Activated CD4-positive, alpha-beta T cell treated with anti-CD3 and anti-CD28 coated beads for 36 hours (primary cell): ENCODE measurements at regions of chr12 and their contacts with region 1.

Region 1: DNA sequence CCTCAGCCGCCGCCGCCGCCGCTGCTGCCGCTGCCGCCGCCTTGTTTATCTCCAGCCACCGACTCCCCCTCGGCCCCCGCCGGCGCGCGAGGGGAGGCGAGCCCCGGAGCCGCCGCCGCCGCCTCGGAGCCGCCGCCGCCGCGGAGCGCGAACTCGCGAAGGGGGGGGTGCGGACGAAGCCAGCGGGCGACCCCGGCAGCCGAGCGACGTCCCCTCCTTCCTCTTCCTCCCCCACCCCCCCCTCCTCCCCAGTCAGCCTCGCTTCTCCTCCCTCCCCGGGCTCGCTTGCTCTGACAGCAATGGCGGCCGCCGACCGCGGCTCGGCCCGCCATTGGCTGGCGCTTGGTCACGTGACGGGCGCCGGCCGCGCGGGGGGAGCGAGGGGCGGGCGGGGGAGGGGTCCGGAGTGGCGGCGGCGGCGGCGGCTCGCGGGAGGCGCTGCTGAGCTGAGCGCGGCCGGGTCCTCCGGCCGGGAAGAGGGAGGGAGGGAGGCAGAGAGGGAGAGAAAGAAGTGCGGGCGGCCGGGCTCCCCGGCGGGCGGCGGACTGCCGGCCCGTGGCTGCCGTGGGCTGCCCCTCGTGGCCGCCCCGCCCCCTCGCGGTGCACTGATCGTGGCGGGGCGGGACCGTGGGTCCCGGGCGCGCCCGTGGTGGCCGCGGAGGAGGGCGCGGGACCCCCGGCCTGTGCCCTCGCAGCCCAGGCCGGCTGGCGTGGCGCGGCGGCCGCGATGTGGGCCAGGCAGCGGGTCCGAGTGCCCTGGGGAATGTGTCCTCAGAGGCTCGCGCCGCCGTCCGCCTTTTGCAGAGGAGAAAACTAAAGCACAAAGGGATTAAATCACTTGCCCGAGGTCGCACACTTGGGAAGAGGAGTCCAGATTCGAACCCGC is at the start of gene MED13L:
- DNase-seq: peak; percentile 92
- ATAC-seq: peak; percentile 82
- H3K4me3 Mint-ChIP-seq: peak within 1 kb of the TSS; percentile 95
- H3K27ac Mint-ChIP-seq: peak within 1 kb of the TSS; percentile 89
- H3K4me1 Mint-ChIP-seq: peaks cover 36% of the 10 kb centered on the region
- H3K27me3 Mint-ChIP-seq: no peaks in the 10 kb centered on the region
- total RNA-seq, gene MED13L: 38.5 to 41.9 TPM

Region 2: DNA sequence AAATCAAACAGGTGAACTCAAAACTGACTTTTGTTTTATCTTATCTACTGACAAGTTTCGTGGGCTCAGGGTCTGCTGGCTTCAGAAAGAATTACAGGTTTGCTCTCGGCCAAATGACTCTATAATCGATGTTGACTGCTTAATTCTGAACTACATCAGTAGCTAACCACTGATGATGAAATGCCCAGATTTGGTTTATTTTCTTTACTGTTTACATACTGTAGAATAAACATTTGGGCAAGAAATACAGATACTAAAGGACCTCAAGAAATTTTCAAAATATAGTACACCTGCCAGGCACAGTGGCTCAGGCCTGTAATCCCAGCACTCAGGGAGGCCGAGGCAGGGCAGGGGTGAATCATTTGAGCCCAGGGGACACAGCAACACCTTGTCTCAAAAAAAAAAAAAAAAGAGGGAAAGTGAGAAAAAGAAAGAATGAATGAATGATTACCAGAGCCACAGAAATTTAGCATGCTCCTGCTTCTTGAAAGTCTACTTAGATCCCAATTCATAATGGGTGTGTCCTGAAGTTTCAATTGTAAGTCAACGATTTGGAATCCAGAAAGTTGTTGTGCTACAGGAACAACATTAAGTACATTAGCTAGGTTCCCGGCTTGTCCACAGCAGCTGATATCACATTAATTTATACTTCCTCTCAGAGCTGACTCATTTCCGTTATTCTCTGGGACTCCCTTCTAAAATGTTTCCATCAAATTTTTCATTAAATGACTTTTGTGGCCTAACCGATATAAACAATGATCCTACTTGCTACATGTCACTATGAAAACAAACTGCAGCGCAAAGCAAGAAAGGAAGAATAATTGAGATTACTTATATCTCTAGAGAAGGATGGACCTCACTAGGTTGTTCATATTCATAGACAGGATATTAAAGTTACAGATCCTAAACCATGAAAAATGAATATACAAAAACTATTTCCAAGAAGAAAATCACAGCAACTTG is 134.4 kb before region 1 on chr12:
- CTCF ChIA-PET with region 1: no interaction called
- POLR2A ChIA-PET with region 1: no interaction called
- intact Hi-C with region 1: loop called (anchors 2 to 5 kb)
- DNase-seq: no peak
- ATAC-seq: peak; percentile 66
- H3K4me3 Mint-ChIP-seq: peak overlapping the region; percentile 31
- H3K27ac Mint-ChIP-seq: peak overlapping the region; percentile 68
- H3K4me1 Mint-ChIP-seq: peaks cover 55% of the 10 kb centered on the region
- H3K27me3 Mint-ChIP-seq: no peaks in the 10 kb centered on the region

Region 3: GRCh38 chr12:116533343-116534251 is 256.0 kb after region 1 on chr12:
- CTCF ChIA-PET with region 1: no interaction called
- POLR2A ChIA-PET with region 1: no interaction called
- intact Hi-C with region 1: loop called in 1 of 2 experiments (anchors 1 kb)
- DNase-seq: peak; percentile 89
- ATAC-seq: peak; percentile 91
- H3K4me3 Mint-ChIP-seq: peak overlapping the region; percentile 73
- H3K27ac Mint-ChIP-seq: no peak overlapping the region
- H3K4me1 Mint-ChIP-seq: peaks cover 37% of the 10 kb centered on the region
- H3K27me3 Mint-ChIP-seq: no peaks in the 10 kb centered on the region

Region 4: GRCh38 chr12:116599285-116600136 is 321.9 kb after region 1 on chr12:
- CTCF ChIA-PET with region 1: no interaction called
- POLR2A ChIA-PET with region 1: interaction called, 3 read pairs
- intact Hi-C with region 1: loop called (anchors 1 to 5 kb)
- DNase-seq: peak; percentile 82
- ATAC-seq: peak; percentile 72
- H3K4me3 Mint-ChIP-seq: no peak overlapping the region
- H3K27ac Mint-ChIP-seq: no peak overlapping the region
- H3K4me1 Mint-ChIP-seq: peaks cover 18% of the 10 kb centered on the region
- H3K27me3 Mint-ChIP-seq: no peaks in the 10 kb centered on the region

Region 5: DNA sequence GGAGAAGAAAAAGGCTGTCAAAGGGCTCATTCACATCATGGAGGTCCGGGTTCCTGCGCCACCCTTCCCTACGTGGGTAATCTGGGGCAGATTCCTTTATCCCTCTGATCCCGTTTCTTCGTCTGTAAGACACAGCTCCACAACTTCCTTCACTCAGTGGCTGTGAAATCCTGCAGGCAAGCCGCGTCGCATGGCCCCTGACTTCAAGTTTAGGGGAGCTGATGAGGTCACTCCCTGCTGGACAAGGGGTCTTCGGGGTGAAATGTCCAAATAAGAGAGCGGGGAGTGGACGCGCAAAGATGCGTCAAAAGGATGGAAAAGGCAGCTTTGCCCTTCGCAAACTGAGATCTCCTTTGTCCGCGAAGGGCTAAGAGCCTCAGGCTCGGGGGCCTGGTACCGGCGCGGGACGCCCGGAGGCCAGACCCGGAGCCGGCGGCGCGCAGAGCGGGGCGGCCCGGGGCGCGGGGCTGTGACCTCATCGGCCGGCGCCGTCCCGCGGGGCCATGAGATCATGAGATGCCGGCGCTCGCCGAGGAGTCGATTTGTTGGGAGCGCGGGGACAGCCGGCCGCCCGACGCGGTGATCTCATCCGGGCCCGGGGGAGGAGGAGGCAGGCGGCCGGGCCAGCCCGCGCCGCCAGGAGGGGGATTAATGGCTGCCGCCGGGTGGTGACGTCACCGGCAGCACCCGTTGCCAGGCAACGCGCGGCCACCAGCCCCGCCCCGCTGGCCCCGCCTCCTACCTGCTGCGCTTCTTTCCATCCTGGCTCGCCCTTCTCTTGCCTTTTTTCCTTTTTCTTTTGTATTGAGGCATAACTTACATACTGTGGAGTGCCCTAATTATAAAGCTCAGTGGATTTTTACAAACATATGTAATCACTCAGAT is 541.6 kb after region 1 on chr12:
- CTCF ChIA-PET with region 1: no interaction called
- POLR2A ChIA-PET with region 1: no interaction called
- intact Hi-C with region 1: loop called in 1 of 2 experiments (anchors 1 kb)
- DNase-seq: peak; percentile 94
- ATAC-seq: peak; percentile 96
- H3K4me3 Mint-ChIP-seq: peak overlapping the region; percentile 91
- H3K27ac Mint-ChIP-seq: peak overlapping the region; percentile 95
- H3K4me1 Mint-ChIP-seq: peaks cover 16% of the 10 kb centered on the region
- H3K27me3 Mint-ChIP-seq: no peaks in the 10 kb centered on the region